BJ (cell line): ENCODE measurements at regions of chr9 and their contacts with region 1.

Region 1: DNA sequence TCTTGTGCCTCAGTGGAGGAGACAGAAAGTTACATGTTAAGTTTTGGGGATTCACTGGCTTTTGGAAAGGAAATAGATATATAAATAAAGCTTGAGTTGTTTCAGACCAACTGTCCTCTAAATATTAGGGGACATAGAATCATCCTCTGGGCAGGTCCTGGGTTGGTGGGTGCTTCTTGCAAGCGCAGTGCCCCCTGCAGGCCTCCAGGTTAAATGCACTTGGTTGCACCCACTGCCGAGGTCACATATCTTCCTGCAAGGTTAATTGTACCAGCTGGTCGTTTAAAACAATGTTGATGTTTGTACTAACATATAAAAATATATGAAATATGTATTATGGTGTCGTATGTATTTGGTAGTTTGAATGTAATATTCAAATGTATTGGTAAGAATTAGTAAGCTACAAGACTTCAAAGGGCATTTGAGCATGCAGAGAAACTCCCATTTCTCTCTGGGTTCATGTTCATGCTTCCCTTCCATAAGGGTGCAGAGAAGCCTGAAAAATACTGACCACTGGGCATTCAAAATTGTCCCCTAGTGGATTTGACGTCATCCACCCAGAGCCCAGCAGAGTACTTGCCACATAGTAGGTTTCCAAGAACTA is 87.0 kb downstream of the ZNF618 start:
- DNase-seq: no peak
- H3K4me3 ChIP-seq: no peak overlapping the region
- H3K27me3 ChIP-seq: no peaks in the 10 kb centered on the region
- CTCF ChIP-seq: peak; percentile 81

Region 2: DNA sequence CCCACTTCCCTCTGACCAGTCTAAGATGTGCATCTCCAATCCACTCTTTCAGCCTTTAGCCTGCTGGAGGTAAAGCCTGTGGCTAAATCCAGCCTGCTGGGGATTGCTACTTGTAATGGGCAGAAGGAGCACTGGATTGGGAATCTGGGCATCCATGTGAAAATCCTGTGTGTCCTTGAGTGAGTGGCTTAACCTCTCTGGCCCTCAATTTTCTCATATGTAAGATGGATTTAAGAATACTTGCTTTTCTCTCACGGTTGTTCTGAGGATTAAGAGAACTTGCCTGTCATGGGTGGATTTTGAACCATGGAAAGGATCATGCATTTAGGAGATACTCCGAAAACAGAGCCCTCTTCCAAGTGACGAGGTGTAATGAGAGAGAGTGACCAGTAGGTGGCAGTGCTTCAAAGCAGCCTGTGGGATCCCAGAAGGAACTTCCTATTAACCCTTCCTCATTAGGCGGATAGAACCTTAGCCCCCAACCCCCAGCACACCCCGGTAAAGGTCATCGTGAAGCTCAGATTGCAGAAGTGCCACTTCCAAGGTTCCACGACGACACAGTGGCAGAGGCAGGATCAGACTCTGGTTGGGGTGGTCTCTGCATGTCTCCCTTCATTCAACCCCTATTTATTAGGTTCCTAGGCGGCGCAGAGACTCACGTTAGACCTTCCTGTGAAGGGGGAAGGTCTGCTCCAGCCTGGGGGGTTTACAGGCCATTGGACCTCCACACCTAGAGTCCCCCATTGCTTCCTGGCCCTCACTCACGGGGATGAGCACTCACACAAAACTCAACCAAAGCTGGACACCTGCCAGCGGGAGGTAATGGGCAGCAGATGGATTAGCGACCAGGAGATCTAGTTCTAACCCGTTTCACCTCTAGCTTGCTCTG is 155.7 kb before region 1 on chr9:
- CTCF ChIA-PET with region 1: interaction called, 60 read pairs
- POLR2A ChIA-PET with region 1: no interaction called
- DNase-seq: no peak
- H3K4me3 ChIP-seq: 0 out of 2 replicates have a peak overlapping the region, but pooled peaks have one; percentile 2
- H3K27me3 ChIP-seq: peaks cover 3% of the 10 kb centered on the region
- CTCF ChIP-seq: peak; percentile 89

Region 3: GRCh38 chr9:113853324-113853723 is 109.8 kb before region 1 on chr9:
- CTCF ChIA-PET with region 1: interaction called, 14 read pairs
- POLR2A ChIA-PET with region 1: no interaction called
- DNase-seq: no peak
- H3K4me3 ChIP-seq: no peak overlapping the region
- H3K27me3 ChIP-seq: peaks cover 4% of the 10 kb centered on the region; the same call in 1 of the 2 replicates
- CTCF ChIP-seq: peak; percentile 56

Region 4: DNA sequence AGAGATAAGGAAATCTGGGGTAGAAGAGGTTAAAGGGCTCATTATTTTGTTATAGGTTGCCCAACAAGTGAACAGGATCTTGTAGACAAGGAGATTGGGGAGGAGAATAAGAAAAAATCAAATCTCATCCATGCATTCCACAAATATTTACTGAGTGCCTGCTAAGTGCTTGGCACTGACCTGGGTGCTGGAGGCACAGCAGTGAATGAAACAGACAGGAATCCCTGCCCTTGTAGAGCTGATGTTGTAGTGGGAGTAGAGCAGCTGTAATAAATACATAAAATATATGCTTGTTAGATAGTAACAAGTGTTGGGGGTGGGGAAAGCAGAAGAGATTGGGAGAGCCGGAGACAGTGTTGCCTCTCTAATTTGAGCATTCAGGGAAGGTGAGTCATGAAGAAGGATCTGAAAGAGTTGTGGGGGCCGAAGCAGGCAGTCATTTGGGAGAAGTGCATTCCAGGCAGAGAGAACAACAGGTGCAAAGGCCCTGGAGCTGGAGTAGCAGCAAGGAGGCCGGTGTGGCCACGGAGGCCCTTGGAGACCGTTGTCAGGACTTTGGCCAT is 10.8 kb after region 1 on chr9:
- CTCF ChIA-PET with region 1: interaction called, 34 read pairs
- POLR2A ChIA-PET with region 1: no interaction called
- DNase-seq: no peak
- H3K4me3 ChIP-seq: no peak overlapping the region
- H3K27me3 ChIP-seq: no peaks in the 10 kb centered on the region
- CTCF ChIP-seq: no peak

Region 5: GRCh38 chr9:113979343-113980127 is 16.4 kb after region 1 on chr9:
- CTCF ChIA-PET with region 1: interaction called, 34 read pairs
- POLR2A ChIA-PET with region 1: no interaction called
- DNase-seq: no peak
- H3K4me3 ChIP-seq: no peak overlapping the region
- H3K27me3 ChIP-seq: no peaks in the 10 kb centered on the region
- CTCF ChIP-seq: no peak